Colonic mucosa (tissue), 4 donors: ENCODE measurements at regions of chr7 and their contacts with region 1.

Region 1: GRCh38 chr7:100889761-100890634 is 483 bp upstream of the UFSP1 start:
- DNase-seq: peak; percentile 94
- H3K4me3 ChIP-seq: peak overlapping the region; percentile 89
- H3K27ac ChIP-seq: peak overlapping the region; percentile 92
- H3K4me1 ChIP-seq: peaks cover 25% of the 10 kb centered on the region
- H3K27me3 ChIP-seq: peaks cover 4% of the 10 kb centered on the region
- CTCF ChIP-seq: no peak

Region 2: GRCh38 chr7:100418930-100419659 is 470.9 kb before region 1 on chr7:
- intact Hi-C with region 1: no loop called
- DNase-seq: no peak
- H3K4me3 ChIP-seq: no peak overlapping the region
- H3K27ac ChIP-seq: no peak overlapping the region
- H3K4me1 ChIP-seq: no peaks in the 10 kb centered on the region
- H3K27me3 ChIP-seq: no peaks in the 10 kb centered on the region
- CTCF ChIP-seq: no peak

Region 3: DNA sequence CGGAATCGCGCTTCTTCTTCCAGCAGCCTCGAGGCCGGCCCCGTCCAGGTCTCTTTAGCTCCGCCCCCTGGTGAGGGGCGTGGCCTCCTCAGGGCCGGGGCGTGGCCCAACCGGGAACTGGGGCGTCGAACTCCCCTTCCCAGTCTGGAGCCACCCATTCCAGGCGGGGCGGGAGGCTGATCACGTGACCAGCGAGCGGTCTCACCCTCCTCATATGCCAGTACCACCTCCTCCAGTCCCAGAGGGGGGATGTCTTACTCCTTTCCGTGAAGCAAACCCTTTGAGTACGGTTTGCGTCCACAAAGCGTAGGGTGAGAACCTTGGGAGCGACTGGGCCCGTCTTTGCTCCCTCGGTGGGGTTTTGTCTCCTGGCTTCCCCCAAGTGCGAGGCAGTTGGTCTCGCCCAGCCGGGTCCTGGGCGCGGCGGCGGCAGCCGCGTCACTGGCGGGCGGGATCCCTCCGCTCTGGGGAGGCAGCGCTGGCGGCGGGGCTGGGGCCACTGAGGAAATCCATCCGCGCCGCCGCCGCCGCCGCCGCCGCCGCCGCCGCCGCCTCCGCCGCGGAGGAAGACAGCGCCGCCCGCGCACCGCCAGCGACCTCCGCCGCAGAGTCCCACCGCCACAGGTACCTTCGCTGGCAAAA is 216.6 kb before region 1 on chr7 and contains the start of gene GNB2:
- intact Hi-C with region 1: no loop called
- DNase-seq: peak; percentile 100
- H3K4me3 ChIP-seq: peak within 1 kb of the TSS; percentile 80
- H3K27ac ChIP-seq: peak within 1 kb of the TSS; percentile 96
- H3K4me1 ChIP-seq: no peaks in the 10 kb centered on the region
- H3K27me3 ChIP-seq: no peaks in the 10 kb centered on the region
- CTCF ChIP-seq: no peak
- total RNA-seq, gene GNB2: 292 to 312 TPM

Region 4: DNA sequence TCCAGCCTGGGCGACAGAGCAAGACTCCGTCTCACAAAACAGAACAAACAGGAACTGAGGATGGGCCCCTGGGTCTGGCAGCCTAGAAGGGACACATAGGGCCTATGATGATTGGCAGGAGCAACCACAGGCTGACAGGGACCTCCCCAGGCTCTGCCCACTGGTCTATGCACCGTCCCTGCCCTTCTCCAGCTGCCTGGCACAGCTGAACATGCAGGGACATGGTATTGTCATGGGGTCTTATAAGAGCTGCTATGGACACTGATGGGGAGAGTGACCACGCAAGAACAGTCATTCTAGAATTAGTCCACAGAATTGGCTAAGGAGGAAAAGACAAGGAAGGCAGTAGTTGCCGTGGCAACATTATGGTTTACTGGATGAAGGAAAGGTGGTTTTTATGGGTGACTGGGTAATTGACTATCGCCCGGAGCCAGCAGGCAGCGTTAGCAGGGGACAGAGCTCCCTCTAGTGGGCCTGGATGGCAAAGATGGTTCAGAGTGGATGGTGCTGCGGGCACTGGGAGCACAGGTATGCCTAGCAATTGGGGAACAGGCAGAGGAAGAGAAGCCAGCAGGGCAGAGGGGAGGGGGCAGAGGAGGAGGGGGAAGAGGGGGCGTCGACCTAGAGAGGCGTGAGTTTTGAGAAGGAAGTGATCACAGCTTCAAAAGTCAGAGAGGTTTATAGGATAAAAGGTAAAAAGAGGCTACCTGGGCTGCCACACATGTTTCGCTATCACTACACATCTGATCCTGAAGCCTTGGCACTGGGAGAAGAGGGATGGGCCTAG is 187.5 kb after region 1 on chr7:
- intact Hi-C with region 1: loop called (anchors 5 kb)
- DNase-seq: peak; percentile 90
- H3K4me3 ChIP-seq: no peak overlapping the region
- H3K27ac ChIP-seq: no peak overlapping the region
- H3K4me1 ChIP-seq: no peaks in the 10 kb centered on the region
- H3K27me3 ChIP-seq: no peaks in the 10 kb centered on the region
- CTCF ChIP-seq: peak; percentile 68